CD4-positive, alpha-beta T cell (primary cell): ENCODE measurements at regions of chr14 and their contacts with region 1.

Region 1: GRCh38 chr14:22556990-22557623 is 31.9 kb downstream of the DAD1 start:
- DNase-seq: peak; percentile 83 to 98 (median 92)
- ATAC-seq: peak; percentile 24
- H3K4me3 ChIP-seq: peak overlapping the region; percentile 58
- H3K4me3 Mint-ChIP-seq: peak overlapping the region; percentile 96
- H3K27ac ChIP-seq: peak overlapping the region; percentile 99
- H3K27ac Mint-ChIP-seq: peak overlapping the region; percentile 97
- H3K4me1 ChIP-seq: peaks cover 100% of the 10 kb centered on the region
- H3K4me1 Mint-ChIP-seq: peaks cover 93% of the 10 kb centered on the region
- H3K27me3 ChIP-seq: no peaks in the 10 kb centered on the region
- H3K27me3 Mint-ChIP-seq: peaks cover 6% of the 10 kb centered on the region
- CTCF ChIP-seq: peak; percentile 100

Region 2: DNA sequence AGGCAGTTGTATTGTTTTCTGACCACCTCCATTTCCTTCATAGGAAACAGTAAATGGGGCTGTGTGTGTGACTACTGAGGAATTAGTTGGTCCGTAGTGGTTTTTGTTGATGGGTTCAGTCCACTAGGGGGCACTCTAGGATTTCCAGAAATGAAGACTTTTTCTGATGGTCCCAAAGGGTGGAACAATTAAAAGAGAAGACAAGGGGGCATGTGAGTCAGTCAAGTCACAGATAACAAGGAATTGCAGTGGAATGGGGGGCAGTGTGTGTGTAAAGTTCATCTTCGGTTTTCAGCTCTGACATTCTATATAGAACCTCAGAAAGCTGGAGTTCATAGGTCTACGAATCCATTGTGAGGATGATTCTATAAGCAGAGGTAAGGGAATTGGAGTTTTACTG is 696.9 kb before region 1 on chr14:
- CTCF ChIA-PET with region 1: interaction called, 5 read pairs
- POLR2A ChIA-PET with region 1: interaction called, 4 read pairs
- intact Hi-C with region 1: loop called (anchors 5 kb)
- DNase-seq: peak in 6 of 14 experiments; percentile 28 to 76 (median 66)
- ATAC-seq: peak; percentile 45
- H3K4me3 ChIP-seq: peak overlapping the region; percentile 42
- H3K4me3 Mint-ChIP-seq: peak overlapping the region; percentile 63
- H3K27ac ChIP-seq: no peak overlapping the region
- H3K27ac Mint-ChIP-seq: peak overlapping the region; percentile 10
- H3K4me1 ChIP-seq: no peaks in the 10 kb centered on the region
- H3K4me1 Mint-ChIP-seq: peaks cover 14% of the 10 kb centered on the region
- H3K27me3 ChIP-seq: no peaks in the 10 kb centered on the region
- H3K27me3 Mint-ChIP-seq: peaks cover 6% of the 10 kb centered on the region
- CTCF ChIP-seq: peak; percentile 67

Region 3: GRCh38 chr14:22070119-22071011 is 486.7 kb before region 1 on chr14:
- CTCF ChIA-PET with region 1: interaction called, 3 read pairs
- POLR2A ChIA-PET with region 1: interaction called, 10 read pairs
- intact Hi-C with region 1: no loop called
- DNase-seq: peak in 13 of 14 experiments; percentile 19 to 80 (median 51)
- ATAC-seq: peak; percentile 80
- H3K4me3 ChIP-seq: peak overlapping the region; percentile 63
- H3K4me3 Mint-ChIP-seq: peak overlapping the region; percentile 97
- H3K27ac ChIP-seq: peak overlapping the region in 1 of 2 donors; percentile 48
- H3K27ac Mint-ChIP-seq: peak overlapping the region; percentile 97
- H3K4me1 ChIP-seq: peaks cover 14% of the 10 kb centered on the region
- H3K4me1 Mint-ChIP-seq: peaks cover 60% of the 10 kb centered on the region
- H3K27me3 ChIP-seq: no peaks in the 10 kb centered on the region
- H3K27me3 Mint-ChIP-seq: no peaks in the 10 kb centered on the region
- CTCF ChIP-seq: no peak

Region 4: GRCh38 chr14:22314181-22314820 is 242.8 kb before region 1 on chr14:
- CTCF ChIA-PET with region 1: interaction called, 3 read pairs
- POLR2A ChIA-PET with region 1: interaction called, 3 read pairs
- intact Hi-C with region 1: loop called in 1 of 2 experiments (anchors 10 kb)
- DNase-seq: peak in 4 of 14 experiments; percentile 2 to 54 (median 46)
- ATAC-seq: peak; percentile 48
- H3K4me3 ChIP-seq: no peak overlapping the region
- H3K4me3 Mint-ChIP-seq: peak overlapping the region; percentile 48
- H3K27ac ChIP-seq: no peak overlapping the region
- H3K27ac Mint-ChIP-seq: peak overlapping the region; percentile 44
- H3K4me1 ChIP-seq: no peaks in the 10 kb centered on the region
- H3K4me1 Mint-ChIP-seq: no peaks in the 10 kb centered on the region
- H3K27me3 ChIP-seq: no peaks in the 10 kb centered on the region
- H3K27me3 Mint-ChIP-seq: no peaks in the 10 kb centered on the region
- CTCF ChIP-seq: no peak

Region 5: DNA sequence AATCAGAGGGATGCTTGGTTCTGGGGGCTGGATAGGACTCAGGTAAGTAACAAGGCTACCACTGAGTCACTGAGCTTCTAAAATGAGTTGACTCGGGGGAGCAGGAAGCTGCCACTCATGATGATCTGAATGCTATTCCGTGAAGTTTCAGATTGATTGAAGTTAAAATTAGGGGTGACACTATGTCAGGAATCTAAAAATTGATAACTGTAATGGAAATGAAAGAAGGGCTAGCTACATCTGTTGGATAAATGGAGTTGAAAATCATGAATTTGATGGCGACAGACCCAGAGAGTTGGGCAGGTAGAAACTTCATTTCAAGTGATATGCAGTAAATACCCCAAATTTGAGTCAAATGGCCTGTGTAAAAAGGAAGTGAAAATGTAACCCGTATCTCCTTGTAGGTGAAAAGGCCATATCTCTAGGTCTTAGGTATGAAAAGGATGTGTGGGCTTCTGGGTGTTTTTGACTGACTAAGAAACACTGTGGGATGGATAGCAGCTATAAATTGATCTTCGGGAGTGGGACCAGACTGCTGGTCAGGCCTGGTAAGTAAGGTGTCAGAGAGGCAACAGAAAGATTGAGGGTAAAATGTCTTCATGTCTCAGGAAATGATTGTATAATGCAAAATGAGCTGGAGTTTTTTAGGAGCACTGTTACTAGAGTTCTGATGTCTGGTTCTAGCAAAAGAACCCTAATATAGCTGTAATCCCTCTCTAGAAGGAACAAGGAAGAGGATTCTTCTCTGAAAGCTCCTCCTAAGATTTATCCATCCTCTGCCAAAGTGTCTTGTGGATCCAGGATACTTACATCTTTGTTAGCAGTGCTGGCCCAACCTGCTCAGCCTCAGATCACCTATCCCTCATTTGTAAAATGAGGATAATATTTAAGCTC is 25.4 kb before region 1 on chr14:
- CTCF ChIA-PET with region 1: interaction called, 41 read pairs
- POLR2A ChIA-PET with region 1: interaction called, 331 read pairs
- intact Hi-C with region 1: no loop called
- DNase-seq: peak in 3 of 14 experiments; percentile 45 to 73 (median 48)
- ATAC-seq: peak; percentile 51
- H3K4me3 ChIP-seq: peak overlapping the region; percentile 61
- H3K4me3 Mint-ChIP-seq: peak overlapping the region; percentile 86
- H3K27ac ChIP-seq: peak overlapping the region; percentile 52 to 99
- H3K27ac Mint-ChIP-seq: peak overlapping the region; percentile 93
- H3K4me1 ChIP-seq: peaks cover 79% of the 10 kb centered on the region
- H3K4me1 Mint-ChIP-seq: peaks cover 95% of the 10 kb centered on the region
- H3K27me3 ChIP-seq: no peaks in the 10 kb centered on the region
- H3K27me3 Mint-ChIP-seq: no peaks in the 10 kb centered on the region
- CTCF ChIP-seq: no peak

Region 6: GRCh38 chr14:22622255-22622654 is 65.1 kb after region 1 on chr14:
- CTCF ChIA-PET with region 1: no interaction called
- POLR2A ChIA-PET with region 1: no interaction called
- intact Hi-C with region 1: no loop called
- DNase-seq: no peak
- ATAC-seq: no peak
- H3K4me3 ChIP-seq: no peak overlapping the region
- H3K4me3 Mint-ChIP-seq: no peak overlapping the region
- H3K27ac ChIP-seq: no peak overlapping the region
- H3K27ac Mint-ChIP-seq: no peak overlapping the region
- H3K4me1 ChIP-seq: no peaks in the 10 kb centered on the region
- H3K4me1 Mint-ChIP-seq: no peaks in the 10 kb centered on the region
- H3K27me3 ChIP-seq: no peaks in the 10 kb centered on the region
- H3K27me3 Mint-ChIP-seq: peaks cover 5% of the 10 kb centered on the region
- CTCF ChIP-seq: no peak

Region 7: GRCh38 chr14:22766456-22767322 is 209.6 kb after region 1 on chr14 and contains the start of gene OXA1L:
- CTCF ChIA-PET with region 1: no interaction called
- POLR2A ChIA-PET with region 1: interaction called, 18 read pairs
- intact Hi-C with region 1: no loop called
- DNase-seq: peak; percentile 86 to 99 (median 96)
- ATAC-seq: peak; percentile 94
- H3K4me3 ChIP-seq: peak within 1 kb of the TSS; percentile 87
- H3K4me3 Mint-ChIP-seq: peak within 1 kb of the TSS; percentile 85
- H3K27ac ChIP-seq: peak within 1 kb of the TSS; percentile 80
- H3K27ac Mint-ChIP-seq: peak within 1 kb of the TSS; percentile 88
- H3K4me1 ChIP-seq: peaks cover 23% of the 10 kb centered on the region
- H3K4me1 Mint-ChIP-seq: peaks cover 33% of the 10 kb centered on the region
- H3K27me3 ChIP-seq: no peaks in the 10 kb centered on the region
- H3K27me3 Mint-ChIP-seq: no peaks in the 10 kb centered on the region
- CTCF ChIP-seq: no peak
- total RNA-seq, gene OXA1L: 176 to 177 TPM

Region 8: DNA sequence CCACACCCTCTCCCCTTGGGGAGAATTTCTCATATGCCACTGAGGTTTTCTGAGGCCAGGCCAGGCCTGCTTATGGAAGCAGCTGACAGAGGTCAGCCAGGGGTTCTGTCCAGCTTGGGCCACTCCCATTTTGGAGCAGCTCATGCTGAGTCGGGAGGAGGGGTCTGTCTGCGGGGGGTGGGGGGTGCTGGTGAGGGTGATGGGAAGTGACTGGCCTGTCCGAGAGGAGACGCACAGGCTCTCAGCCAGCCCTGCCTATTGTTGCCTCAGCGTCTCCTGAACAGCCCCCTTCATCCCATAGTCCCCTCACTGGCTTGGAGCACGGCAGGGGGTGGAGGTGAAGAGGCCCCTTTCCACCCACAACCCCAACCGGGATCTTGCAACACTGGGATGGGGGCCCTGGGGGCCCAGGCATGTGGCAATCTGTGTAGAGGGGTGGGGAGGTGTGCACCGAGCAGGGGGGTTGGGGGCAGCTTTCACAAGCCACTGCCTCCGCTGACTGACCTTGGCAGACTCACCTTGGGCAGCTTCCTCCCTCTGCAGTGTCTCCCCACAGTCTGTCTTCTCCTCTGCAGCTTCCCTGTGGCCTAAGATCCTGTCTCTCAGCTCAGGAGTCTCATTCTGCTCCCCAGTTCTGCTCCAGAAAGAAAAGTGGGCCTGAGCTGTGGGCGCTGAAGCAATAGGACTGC is 556.5 kb after region 1 on chr14:
- CTCF ChIA-PET with region 1: no interaction called
- POLR2A ChIA-PET with region 1: no interaction called
- intact Hi-C with region 1: no loop called
- DNase-seq: no peak
- ATAC-seq: no peak
- H3K4me3 ChIP-seq: no peak overlapping the region
- H3K4me3 Mint-ChIP-seq: no peak overlapping the region
- H3K27ac ChIP-seq: no peak overlapping the region
- H3K27ac Mint-ChIP-seq: no peak overlapping the region
- H3K4me1 ChIP-seq: peaks cover 23% of the 10 kb centered on the region
- H3K4me1 Mint-ChIP-seq: peaks cover 26% of the 10 kb centered on the region
- H3K27me3 ChIP-seq: peaks cover 16 to 19% of the 10 kb centered on the region in 2 experiments
- H3K27me3 Mint-ChIP-seq: no peaks in the 10 kb centered on the region
- CTCF ChIP-seq: no peak